Caco-2 (cell line): ENCODE measurements at regions of chr9 and their contacts with region 1.

Region 1: GRCh38 chr9:99221621-99222415 is at the starts of genes ALG2 and SEC61B:
- DNase-seq: peak; percentile 94
- H3K4me3 ChIP-seq: peak within 1 kb of the TSS; percentile 72
- H3K4me3 Mint-ChIP-seq: peak within 1 kb of the TSS; percentile 100
- H3K27ac Mint-ChIP-seq: peak within 1 kb of the TSS; percentile 100
- H3K4me1 ChIP-seq: no peaks in the 10 kb centered on the region
- H3K4me1 Mint-ChIP-seq: peaks cover 21% of the 10 kb centered on the region
- H3K27me3 ChIP-seq: no peaks in the 10 kb centered on the region
- H3K27me3 Mint-ChIP-seq: no peaks in the 10 kb centered on the region
- CTCF ChIP-seq: no peak
- total RNA-seq, gene ALG2: 37.9 and 39.8 TPM in 2 replicates
- total RNA-seq, gene SEC61B: 167 and 170 TPM in 2 replicates

Region 2: GRCh38 chr9:99169982-99170761 is 51.6 kb before region 1 on chr9:
- CTCF ChIA-PET with region 1: no interaction called
- POLR2A ChIA-PET with region 1: no interaction called
- intact Hi-C with region 1: loop called (anchors 5 kb)
- DNase-seq: no peak
- H3K4me3 ChIP-seq: no peak overlapping the region
- H3K4me3 Mint-ChIP-seq: no peak overlapping the region
- H3K27ac Mint-ChIP-seq: no peak overlapping the region
- H3K4me1 ChIP-seq: peaks cover 21% of the 10 kb centered on the region
- H3K4me1 Mint-ChIP-seq: peaks cover 31% of the 10 kb centered on the region
- H3K27me3 ChIP-seq: no peaks in the 10 kb centered on the region; the same call in 1 of the 2 replicates
- H3K27me3 Mint-ChIP-seq: peaks cover 2% of the 10 kb centered on the region
- CTCF ChIP-seq: no peak